ENCODE measurements at regions of chr5 and their contacts with region 1.

Region 1: GRCh38 chr5:174581479-174581878 is 142.9 kb upstream of the MSX2 start:
- DNase-seq: peak; percentile 61 to 72
- H3K4me3 ChIP-seq: no peak overlapping the region
- H3K4me3 Mint-ChIP-seq: no peak overlapping the region
- H3K27ac Mint-ChIP-seq: no peak overlapping the region
- H3K4me1 ChIP-seq: peaks cover 9% of the 10 kb centered on the region; the same call in 1 of the 2 replicates
- H3K4me1 Mint-ChIP-seq: peaks cover 16% of the 10 kb centered on the region
- H3K27me3 ChIP-seq: no peaks in the 10 kb centered on the region
- H3K27me3 Mint-ChIP-seq: no peaks in the 10 kb centered on the region
- CTCF ChIP-seq: peak; percentile 68 to 70

Region 2: GRCh38 chr5:174533751-174534241 is 47.7 kb before region 1 on chr5:
- CTCF ChIA-PET with region 1: no interaction called
- POLR2A ChIA-PET with region 1: no interaction called
- intact Hi-C with region 1: no loop called
- DNase-seq: no peak
- H3K4me3 ChIP-seq: no peak overlapping the region
- H3K4me3 Mint-ChIP-seq: no peak overlapping the region
- H3K27ac Mint-ChIP-seq: no peak overlapping the region
- H3K4me1 ChIP-seq: peaks cover 58% of the 10 kb centered on the region
- H3K4me1 Mint-ChIP-seq: peaks cover 49% of the 10 kb centered on the region
- H3K27me3 ChIP-seq: no peaks in the 10 kb centered on the region
- H3K27me3 Mint-ChIP-seq: no peaks in the 10 kb centered on the region
- CTCF ChIP-seq: no peak

Region 3: GRCh38 chr5:174735498-174736330 is 154.2 kb after region 1 on chr5:
- CTCF ChIA-PET with region 1: no interaction called
- POLR2A ChIA-PET with region 1: no interaction called
- intact Hi-C with region 1: loop called (anchors 1 kb)
- DNase-seq: peak; percentile 87 to 90
- H3K4me3 ChIP-seq: peak overlapping the region; percentile 50
- H3K4me3 Mint-ChIP-seq: peak overlapping the region; percentile 86
- H3K27ac Mint-ChIP-seq: peak overlapping the region; percentile 52
- H3K4me1 ChIP-seq: peaks cover 36% of the 10 kb centered on the region
- H3K4me1 Mint-ChIP-seq: peaks cover 24% of the 10 kb centered on the region
- H3K27me3 ChIP-seq: no peaks in the 10 kb centered on the region
- H3K27me3 Mint-ChIP-seq: no peaks in the 10 kb centered on the region
- CTCF ChIP-seq: peak; percentile 74 to 90